ENCODE measurements at regions of chr11 and their contacts with region 1.

Region 1: DNA sequence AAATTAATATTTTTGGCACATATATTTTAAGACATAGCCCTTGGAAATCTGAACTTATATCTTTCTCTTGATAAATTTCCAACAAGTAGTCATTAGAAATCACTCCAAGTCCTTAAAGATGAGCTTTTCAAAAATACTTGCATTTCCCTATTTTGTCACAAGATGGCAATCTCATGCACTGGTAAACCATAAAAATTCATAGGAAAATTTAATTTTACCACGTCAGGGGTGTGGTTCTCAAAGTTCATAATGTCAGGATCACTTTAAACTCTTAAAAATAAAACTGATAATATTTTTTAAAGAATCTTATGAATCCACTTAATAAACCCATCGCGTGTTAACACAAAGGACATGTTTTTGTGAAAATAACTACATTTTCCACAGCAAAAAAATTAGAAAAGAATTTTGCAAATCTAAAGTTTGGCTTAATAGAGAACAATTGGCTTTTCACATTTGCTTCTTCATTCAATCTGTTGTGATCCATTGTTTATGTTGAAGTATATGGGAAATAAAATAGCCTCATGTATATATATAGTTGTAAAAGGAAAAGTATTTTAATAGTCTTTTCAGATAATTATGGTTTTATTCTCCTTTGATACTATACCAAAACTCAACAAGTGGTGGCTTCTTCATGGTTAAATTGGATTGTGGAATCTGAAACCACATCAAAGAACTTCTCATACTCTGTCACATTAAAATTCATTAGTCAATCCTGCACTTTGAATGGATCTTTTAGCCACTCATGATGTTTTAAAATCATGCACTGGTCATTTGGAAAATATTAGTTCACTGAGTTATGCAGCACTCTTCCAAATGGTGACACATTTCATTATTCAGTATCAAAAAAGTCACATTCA is 169.1 kb downstream of the CADM1 start:
- H3K4me3 Mint-ChIP-seq: no peak overlapping the region
- H3K27ac Mint-ChIP-seq: no peak overlapping the region
- H3K4me1 Mint-ChIP-seq: no peaks in the 10 kb centered on the region
- H3K27me3 Mint-ChIP-seq: no peaks in the 10 kb centered on the region

Region 2: GRCh38 chr11:115290893-115291292 is 44.3 kb before region 1 on chr11:
- intact Hi-C with region 1: no loop called
- H3K4me3 Mint-ChIP-seq: no peak overlapping the region
- H3K27ac Mint-ChIP-seq: no peak overlapping the region
- H3K4me1 Mint-ChIP-seq: no peaks in the 10 kb centered on the region
- H3K27me3 Mint-ChIP-seq: no peaks in the 10 kb centered on the region

Region 3: GRCh38 chr11:115504276-115505158 is 169.4 kb after region 1 on chr11 and contains the start of gene CADM1:
- intact Hi-C with region 1: loop called (anchors 10 kb)
- H3K4me3 Mint-ChIP-seq: peak within 1 kb of the TSS; percentile 67
- H3K27ac Mint-ChIP-seq: no peak within 1 kb of the TSS
- H3K4me1 Mint-ChIP-seq: peaks cover 22% of the 10 kb centered on the region
- H3K27me3 Mint-ChIP-seq: peaks cover 52% of the 10 kb centered on the region

Region 4: GRCh38 chr11:116073854-116074837 is 739.0 kb after region 1 on chr11:
- intact Hi-C with region 1: loop called (anchors 10 kb)
- H3K4me3 Mint-ChIP-seq: no peak overlapping the region
- H3K27ac Mint-ChIP-seq: no peak overlapping the region
- H3K4me1 Mint-ChIP-seq: no peaks in the 10 kb centered on the region
- H3K27me3 Mint-ChIP-seq: peaks cover 14% of the 10 kb centered on the region

Region 5: DNA sequence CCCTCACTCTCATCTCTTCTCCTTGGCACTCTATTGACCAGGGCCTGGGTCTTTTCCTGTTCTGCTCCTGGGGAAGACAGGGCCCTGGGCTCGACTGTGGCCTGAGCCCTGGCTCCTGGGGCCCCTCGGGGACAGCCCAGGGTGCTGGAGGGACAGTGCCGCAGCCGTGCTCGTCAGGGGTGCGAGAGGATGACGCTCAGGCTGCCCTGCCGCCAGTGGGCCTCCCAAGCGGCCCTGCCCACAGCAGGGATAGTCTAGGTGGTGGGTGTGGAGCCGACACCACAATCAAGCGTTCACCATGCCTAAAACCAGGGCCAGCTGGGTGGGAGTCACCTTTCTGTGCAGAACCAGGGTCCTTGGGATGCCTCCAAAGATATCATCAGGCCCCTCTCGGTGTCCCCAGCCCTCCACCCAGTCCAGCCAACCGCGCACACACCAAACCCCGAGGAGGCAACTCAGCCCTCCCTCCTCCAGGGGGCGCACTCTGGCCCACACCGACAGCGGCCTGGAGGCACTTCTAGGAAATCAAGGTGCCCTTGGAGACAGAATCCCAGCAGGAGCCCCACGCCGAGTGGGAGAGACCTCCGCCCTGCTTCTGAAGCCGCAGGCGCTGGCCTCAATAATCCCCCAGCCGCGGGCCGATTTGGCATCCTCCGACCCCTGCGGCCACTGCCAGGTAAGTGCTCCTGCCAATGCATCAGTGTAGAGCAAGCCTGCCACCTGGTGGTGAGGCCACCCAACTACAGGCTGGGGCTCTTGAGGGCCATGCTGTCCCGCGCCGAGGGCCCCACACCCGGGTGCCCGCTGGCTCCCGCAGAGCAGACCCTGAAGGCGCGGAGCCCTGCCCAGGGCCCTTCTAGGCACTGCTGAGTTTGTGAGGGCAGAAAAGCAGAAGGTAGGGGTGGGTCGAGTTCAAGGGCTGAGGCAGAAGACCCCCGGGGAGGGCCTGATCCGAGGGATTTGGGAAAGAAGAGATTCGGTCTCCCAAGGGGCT is 941.2 kb after region 1 on chr11:
- intact Hi-C with region 1: loop called (anchors 5 kb)
- H3K4me3 Mint-ChIP-seq: no peak overlapping the region
- H3K27ac Mint-ChIP-seq: no peak overlapping the region
- H3K4me1 Mint-ChIP-seq: no peaks in the 10 kb centered on the region
- H3K27me3 Mint-ChIP-seq: peaks cover 13% of the 10 kb centered on the region